ENCODE measurements at regions of chr17 and their contacts with region 1.

Region 1: GRCh38 chr17:59762513-59763374 is 55.3 kb downstream of the VMP1 start:
- DNase-seq: no peak
- H3K4me3 Mint-ChIP-seq: peak overlapping the region; percentile 64
- H3K27ac Mint-ChIP-seq: peak overlapping the region; percentile 96
- H3K4me1 Mint-ChIP-seq: peaks cover 58% of the 10 kb centered on the region
- H3K27me3 Mint-ChIP-seq: no peaks in the 10 kb centered on the region

Region 2: GRCh38 chr17:59829217-59830006 is 66.7 kb after region 1 on chr17:
- intact Hi-C with region 1: loop called (anchors 1 kb)
- DNase-seq: peak; percentile 66
- H3K4me3 Mint-ChIP-seq: peak overlapping the region; percentile 90
- H3K27ac Mint-ChIP-seq: peak overlapping the region; percentile 100
- H3K4me1 Mint-ChIP-seq: peaks cover 79% of the 10 kb centered on the region
- H3K27me3 Mint-ChIP-seq: no peaks in the 10 kb centered on the region

Region 3: GRCh38 chr17:59837308-59838051 is 74.7 kb after region 1 on chr17:
- intact Hi-C with region 1: loop called (anchors 1 kb)
- DNase-seq: peak; percentile 81
- H3K4me3 Mint-ChIP-seq: peak overlapping the region; percentile 96
- H3K27ac Mint-ChIP-seq: peak overlapping the region; percentile 99
- H3K4me1 Mint-ChIP-seq: peaks cover 27% of the 10 kb centered on the region
- H3K27me3 Mint-ChIP-seq: peaks cover 2% of the 10 kb centered on the region

Region 4: GRCh38 chr17:59859444-59860025 is 96.8 kb after region 1 on chr17:
- intact Hi-C with region 1: no loop called
- DNase-seq: no peak
- H3K4me3 Mint-ChIP-seq: no peak overlapping the region
- H3K27ac Mint-ChIP-seq: peak overlapping the region; percentile 67
- H3K4me1 Mint-ChIP-seq: peaks cover 28% of the 10 kb centered on the region
- H3K27me3 Mint-ChIP-seq: no peaks in the 10 kb centered on the region

Measured in activated T-helper 1 cell treated with anti-CD3 and anti-CD28 coated beads, Interleukin-12 subunit alpha, Interleukin-12 subunit beta, Interleukin-2, Interleukin-4 antibody, amounts not matched to agents 30 ng/mL and 10 ng/mL and 1 ng/mL, durations not matched to agents 14 hours and 24 hours and 36 hours (primary cell).